ENCODE measurements at regions of chr21 and their contacts with region 1.

Region 1: DNA sequence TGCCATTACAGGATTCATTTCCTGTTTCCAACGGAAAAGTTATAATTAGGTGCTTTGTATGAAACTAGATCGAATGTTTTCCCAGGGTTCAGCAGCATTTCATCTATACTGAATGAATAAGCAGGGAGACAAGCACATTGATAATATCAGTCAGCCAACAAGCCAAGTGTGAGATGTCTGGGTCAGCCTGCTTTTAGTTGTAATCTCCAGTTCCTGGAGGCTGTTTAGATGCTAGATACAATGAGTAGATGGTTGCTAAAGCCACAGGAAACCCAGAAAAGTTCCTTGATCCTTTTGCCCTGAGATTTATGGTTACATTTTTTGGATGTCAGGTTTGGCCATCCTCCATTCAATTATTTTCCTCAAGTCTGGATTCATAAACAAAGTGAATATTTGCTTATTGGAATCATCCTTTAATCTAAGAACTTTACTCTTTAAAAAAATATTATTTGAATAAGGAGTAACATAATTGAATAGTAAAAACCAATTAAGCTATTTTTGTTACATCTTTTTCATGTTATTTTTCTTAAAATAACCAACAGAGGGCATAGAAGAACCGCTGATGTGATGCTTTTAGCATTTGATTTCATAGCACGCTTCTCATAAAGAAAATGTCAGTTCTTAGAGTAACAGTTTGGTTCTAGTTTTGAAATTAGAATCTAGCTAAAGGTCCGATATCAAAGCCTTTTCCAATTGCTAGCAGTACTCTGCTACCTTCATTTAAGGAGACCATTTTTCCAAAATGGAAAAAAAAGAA is 76.6 kb downstream of the HSPA13 start:
- DNase-seq: no peak

Region 2: DNA sequence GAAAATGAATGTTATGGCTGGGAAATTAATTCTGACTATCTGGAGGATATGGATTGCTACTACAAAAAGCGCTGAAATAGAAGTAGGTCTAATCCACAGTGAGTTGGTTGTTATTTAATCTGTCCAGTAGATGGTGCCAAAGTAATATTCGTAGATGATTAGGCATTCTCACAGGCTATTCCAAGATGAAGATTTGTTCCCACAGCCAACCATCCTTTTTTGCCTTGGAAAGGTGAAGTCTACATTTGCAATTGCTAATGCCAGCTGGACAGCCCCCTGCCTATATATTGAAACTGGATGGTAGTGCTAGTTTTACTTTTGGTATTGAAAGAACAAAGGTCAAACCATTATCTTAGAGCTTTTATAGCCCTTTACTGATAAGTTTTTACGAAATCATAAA is 46.6 kb before region 1 on chr21:
- intact Hi-C with region 1: no loop called
- DNase-seq: no peak

Region 3: DNA sequence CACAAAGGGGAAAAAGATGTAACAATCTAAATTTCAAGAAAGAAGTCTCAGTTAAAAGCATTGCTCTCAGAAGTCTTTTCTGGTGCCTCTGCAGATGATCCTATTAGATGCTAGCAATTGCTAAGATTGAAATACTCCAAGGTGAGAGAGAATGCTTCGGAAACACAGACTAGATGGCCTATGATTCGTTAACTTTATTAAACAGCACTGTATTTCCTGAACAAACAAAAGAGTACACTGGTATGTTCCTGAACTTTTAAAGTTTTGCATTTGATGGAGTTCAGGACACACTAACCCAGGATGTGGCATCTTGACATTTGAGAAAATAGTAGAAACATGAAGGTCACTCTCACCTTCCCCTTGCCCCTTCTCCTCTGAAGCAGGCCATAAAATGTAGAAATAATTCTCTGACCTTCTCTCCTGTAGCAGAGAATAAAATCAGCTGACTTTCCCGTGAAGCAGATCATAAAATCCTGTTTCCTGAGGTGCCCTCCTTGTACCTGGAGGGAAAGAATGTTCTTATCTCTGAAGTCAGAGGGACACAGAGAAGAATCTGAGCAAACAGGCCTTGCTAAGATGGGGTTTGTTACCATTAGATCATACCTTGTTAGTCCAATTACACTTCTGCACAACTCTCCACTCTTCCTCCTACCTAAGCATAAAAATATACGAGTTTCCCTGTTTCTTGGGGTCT is 1280.6 kb after region 1 on chr21:
- intact Hi-C with region 1: loop called (anchors 10 kb)
- DNase-seq: no peak